Mammary epithelial cell (primary cell): ENCODE measurements at regions of chr22 and their contacts with region 1.

Region 1: DNA sequence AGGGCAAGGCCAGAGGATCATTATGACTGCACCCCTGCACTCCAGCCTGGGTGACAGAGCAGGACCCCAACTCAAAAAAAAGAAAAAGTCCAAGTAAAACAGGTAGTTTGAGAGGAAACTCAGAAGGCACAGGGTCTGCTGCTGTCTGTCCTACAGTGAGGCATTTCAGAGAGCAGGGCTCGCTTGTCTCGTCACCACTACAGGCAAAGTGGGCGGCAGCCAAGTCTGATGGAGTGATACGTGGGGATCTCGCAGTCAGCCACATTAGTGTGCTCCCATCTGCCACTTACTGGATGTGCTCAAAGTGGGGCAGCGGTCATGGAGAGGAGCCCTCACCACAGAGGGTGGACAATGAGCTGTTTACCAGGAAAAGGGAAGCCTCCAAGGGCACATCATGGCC is 42.1 kb downstream of the PI4KA start:
- DNase-seq: no peak
- H3K4me3 ChIP-seq: no peak overlapping the region
- H3K27ac ChIP-seq: no peak overlapping the region
- H3K4me1 ChIP-seq: no peaks in the 10 kb centered on the region
- H3K27me3 ChIP-seq: no peaks in the 10 kb centered on the region
- CTCF ChIP-seq: no peak

Region 2: DNA sequence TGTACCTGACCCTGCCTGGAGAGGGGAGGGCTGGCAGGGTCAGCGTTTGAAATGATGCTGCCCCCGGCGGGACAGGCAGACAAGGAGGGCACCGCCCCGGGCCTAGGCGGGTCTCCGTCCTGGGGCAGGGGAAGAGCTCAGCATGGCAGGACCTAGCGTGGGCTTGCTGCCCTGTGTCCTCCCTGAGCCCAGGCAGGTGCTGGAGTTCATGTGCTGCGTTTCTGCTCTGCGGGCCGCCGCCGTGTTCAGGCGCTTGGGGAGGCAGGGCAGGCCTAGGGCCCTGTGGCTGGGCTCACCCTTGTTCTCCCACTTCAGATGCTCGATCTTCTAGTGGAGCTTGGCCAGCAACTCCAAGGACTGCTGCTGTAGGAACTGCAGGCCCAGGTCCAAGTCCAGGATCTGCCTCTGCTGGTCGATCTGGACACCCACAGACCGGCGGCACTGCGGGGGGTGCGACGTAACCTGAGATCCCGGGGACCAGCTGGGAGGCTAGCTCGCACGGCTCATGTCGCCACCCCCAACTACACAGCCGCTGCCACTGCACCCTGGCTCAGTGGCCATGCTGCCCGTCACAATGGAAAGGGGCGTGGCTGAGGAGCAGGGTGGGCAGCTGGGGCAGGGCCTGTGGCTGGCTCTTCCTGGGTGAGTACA is 224.8 kb before region 1 on chr22:
- CTCF ChIA-PET with region 1: no interaction called
- dilution Hi-C with region 1: no loop called
- in situ Hi-C with region 1: no loop called
- intact Hi-C with region 1: no loop called
- DNase-seq: no peak
- H3K4me3 ChIP-seq: no peak overlapping the region
- H3K27ac ChIP-seq: no peak overlapping the region
- H3K4me1 ChIP-seq: peaks cover 30% of the 10 kb centered on the region
- H3K27me3 ChIP-seq: no peaks in the 10 kb centered on the region
- CTCF ChIP-seq: no peak

Region 3: GRCh38 chr22:20777420-20778177 is 39.0 kb before region 1 on chr22:
- CTCF ChIA-PET with region 1: no interaction called
- dilution Hi-C with region 1: loop called (anchors 5 kb)
- in situ Hi-C with region 1: no loop called
- intact Hi-C with region 1: no loop called
- DNase-seq: peak; percentile 94
- H3K4me3 ChIP-seq: no peak overlapping the region
- H3K27ac ChIP-seq: peak overlapping the region; percentile 4
- H3K4me1 ChIP-seq: peaks cover 13% of the 10 kb centered on the region
- H3K27me3 ChIP-seq: no peaks in the 10 kb centered on the region
- CTCF ChIP-seq: peak; percentile 24 to 38

Region 4: GRCh38 chr22:20885557-20886323 is 69.2 kb after region 1 on chr22:
- CTCF ChIA-PET with region 1: no interaction called
- dilution Hi-C with region 1: no loop called
- in situ Hi-C with region 1: no loop called
- intact Hi-C with region 1: no loop called
- DNase-seq: peak; percentile 75
- H3K4me3 ChIP-seq: peak overlapping the region in 1 of 3 experiments; percentile 22
- H3K27ac ChIP-seq: peak overlapping the region; percentile 42
- H3K4me1 ChIP-seq: peaks cover 15% of the 10 kb centered on the region
- H3K27me3 ChIP-seq: no peaks in the 10 kb centered on the region
- CTCF ChIP-seq: peak; percentile 97 to 99